Prostate gland (tissue), 2 donors: ENCODE measurements at regions of chrX and their contacts with region 1.

Region 1: DNA sequence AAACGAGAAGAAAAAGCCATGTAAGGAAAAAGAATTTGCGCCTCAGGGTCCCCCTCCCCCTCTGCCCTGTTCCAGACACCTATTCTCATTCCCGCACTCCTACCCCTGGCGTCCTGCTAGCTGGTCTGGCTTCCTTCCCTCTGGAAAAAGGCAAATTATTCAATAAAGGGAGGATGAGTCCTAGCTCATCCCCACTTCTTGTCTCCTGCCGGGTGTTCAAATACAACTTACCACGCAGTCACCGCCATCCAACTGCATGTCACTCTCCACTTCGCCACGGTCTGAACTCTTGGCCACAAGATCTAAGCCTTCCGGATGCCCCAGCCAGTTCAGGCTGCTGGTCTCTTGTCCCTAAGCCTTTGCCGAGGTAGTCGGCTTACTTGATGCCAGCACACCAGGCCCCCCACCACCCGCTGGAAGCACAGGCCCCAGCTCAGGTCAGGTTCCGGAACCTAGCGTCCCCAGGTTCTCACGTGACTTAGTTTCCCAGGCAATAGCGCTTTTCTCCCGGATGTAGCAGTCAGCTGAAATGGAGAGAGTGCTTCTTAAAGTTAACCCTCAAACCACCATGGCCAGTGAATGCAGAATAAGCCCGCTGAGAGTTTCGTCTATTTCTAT is 209.6 kb upstream of the SPIN4 start:
- DNase-seq: peak; percentile 63
- H3K4me3 ChIP-seq: peak overlapping the region; percentile 47 to 49
- H3K27ac ChIP-seq: peak overlapping the region; percentile 65 to 80
- H3K4me1 ChIP-seq: no peaks in the 10 kb centered on the region
- H3K27me3 ChIP-seq: no peaks in the 10 kb centered on the region
- CTCF ChIP-seq: no peak
- POLR2A ChIP-seq: peak; percentile 12

Region 2: DNA sequence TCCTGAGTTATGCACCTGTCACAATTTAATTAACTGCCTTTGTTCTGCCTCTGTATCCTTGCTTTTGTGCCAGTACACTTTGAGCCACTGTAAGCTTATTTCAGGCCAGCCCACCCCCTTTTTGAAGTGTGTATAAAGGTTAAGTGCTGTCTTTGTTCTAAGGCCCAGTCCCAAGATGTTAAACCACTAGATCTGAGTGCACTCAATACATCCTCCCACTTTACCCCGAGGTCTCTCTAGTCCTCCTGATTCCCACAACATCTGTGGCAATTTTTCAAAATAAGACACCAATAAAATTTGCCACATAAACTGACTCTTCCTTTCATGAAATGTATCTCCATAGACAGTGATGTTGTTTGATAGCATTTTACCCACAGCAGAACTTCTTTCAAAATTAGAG is 85.5 kb before region 1 on chrX:
- intact Hi-C with region 1: no loop called
- DNase-seq: no peak
- H3K4me3 ChIP-seq: no peak overlapping the region
- H3K27ac ChIP-seq: no peak overlapping the region
- H3K4me1 ChIP-seq: no peaks in the 10 kb centered on the region
- H3K27me3 ChIP-seq: no peaks in the 10 kb centered on the region
- CTCF ChIP-seq: no peak
- POLR2A ChIP-seq: no peak

Region 3: GRCh38 chrX:63680423-63680822 is 119.7 kb after region 1 on chrX:
- intact Hi-C with region 1: no loop called
- DNase-seq: no peak
- H3K4me3 ChIP-seq: no peak overlapping the region
- H3K27ac ChIP-seq: no peak overlapping the region
- H3K4me1 ChIP-seq: no peaks in the 10 kb centered on the region
- H3K27me3 ChIP-seq: no peaks in the 10 kb centered on the region
- CTCF ChIP-seq: no peak
- POLR2A ChIP-seq: no peak

Region 4: DNA sequence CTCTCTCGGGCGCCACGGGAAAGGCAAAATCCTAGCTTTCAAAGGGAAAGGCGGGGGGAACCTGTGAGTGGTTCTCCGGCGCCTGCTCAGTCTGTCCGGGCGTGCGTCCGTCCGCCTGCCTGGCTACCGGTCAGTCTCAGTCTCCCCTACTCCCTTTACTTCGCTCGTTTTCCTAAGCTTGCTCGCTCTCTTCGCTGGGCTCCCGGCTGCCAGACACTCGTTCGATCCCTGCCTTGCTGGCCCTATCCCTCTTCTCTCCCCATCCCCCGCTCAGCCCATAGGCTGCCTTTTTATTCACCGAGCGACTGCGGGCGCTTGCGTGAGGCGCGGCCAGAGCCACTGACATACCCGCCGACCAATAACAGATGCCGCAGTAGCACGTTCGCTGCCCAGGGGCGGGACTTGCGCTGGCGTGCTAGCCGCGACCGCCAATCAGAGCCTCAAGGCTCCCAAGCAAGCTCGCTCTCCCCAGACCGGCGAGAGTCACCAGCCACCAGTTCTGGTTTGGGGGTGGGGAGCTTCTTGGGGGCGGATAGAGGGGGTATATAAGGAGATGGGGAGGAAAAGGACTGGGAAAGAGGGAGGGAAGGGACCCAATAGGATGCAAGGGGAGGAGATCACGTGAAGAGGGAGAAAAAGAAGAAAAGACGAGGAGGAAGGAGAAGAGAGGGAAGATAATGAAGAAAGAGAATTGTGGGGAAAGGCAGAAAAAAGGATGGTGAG is 194.3 kb after region 1 on chrX:
- intact Hi-C with region 1: loop called (anchors 10 kb)
- DNase-seq: peak; percentile 90
- H3K4me3 ChIP-seq: peak overlapping the region; percentile 50 to 53
- H3K27ac ChIP-seq: peak overlapping the region; percentile 89 to 92
- H3K4me1 ChIP-seq: no peaks in the 10 kb centered on the region
- H3K27me3 ChIP-seq: no peaks in the 10 kb centered on the region
- CTCF ChIP-seq: no peak
- POLR2A ChIP-seq: peak; percentile 78